Dendritic cell treated with granulocyte-macrophage colony-stimulating factor and Interleukin-4, amounts not matched to agents 40 ng/mL and 50 ng/mL, for 4 days (primary cell): ENCODE measurements at regions of chr1 and their contacts with region 1.

Region 1: GRCh38 chr1:219660666-219661463 is 48.0 kb upstream of the ZC3H11B start:
- H3K4me3 Mint-ChIP-seq: peak overlapping the region; percentile 66
- H3K27ac Mint-ChIP-seq: no peak overlapping the region
- H3K4me1 Mint-ChIP-seq: peaks cover 13% of the 10 kb centered on the region
- H3K27me3 Mint-ChIP-seq: peaks cover 2% of the 10 kb centered on the region

Region 2: GRCh38 chr1:219209578-219209977 is 451.3 kb before region 1 on chr1:
- intact Hi-C with region 1: loop called (anchors 2 kb)
- H3K4me3 Mint-ChIP-seq: no peak overlapping the region
- H3K27ac Mint-ChIP-seq: no peak overlapping the region
- H3K4me1 Mint-ChIP-seq: peaks cover 6% of the 10 kb centered on the region
- H3K27me3 Mint-ChIP-seq: no peaks in the 10 kb centered on the region